ENCODE measurements at regions of chr6 and their contacts with region 1.

Region 1: DNA sequence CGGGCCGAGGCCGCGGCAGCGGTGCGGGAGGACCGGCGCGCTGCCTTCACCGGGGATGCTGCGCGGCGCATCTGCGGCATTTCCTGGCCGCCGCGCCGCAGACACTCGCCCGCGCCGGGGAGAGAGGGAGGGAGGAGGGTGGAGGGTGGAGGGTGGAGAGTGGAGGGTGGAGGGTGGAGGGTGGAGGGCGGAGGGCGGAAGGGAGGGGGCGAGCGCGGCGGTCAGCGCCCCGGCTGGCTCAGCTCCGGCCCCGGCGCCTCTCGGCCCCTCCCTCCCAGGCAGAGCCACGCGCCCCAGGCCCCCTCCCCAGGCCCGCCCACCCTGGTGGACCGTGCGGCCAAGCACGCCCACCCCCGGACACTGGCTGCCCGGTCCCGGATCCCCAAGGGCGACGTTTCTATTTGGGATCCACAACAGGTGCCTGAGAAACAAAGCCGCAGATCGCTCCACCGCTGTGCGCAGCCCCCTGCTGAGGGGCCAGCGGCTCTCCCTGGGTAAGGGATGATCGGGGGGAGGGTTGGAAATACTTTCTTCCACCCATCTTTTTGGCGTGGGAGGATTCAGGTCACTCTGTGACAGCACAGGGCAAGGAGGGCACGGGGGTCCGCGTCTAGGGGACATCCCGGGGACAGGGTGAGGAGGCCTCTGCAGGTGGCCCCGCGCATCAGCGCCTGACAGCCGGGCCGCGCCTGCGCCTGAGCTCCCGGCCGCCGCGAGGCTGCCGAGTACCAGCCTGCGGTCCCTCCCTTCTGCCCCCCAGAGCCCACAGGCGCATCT is 111.1 kb upstream of the BEND6 start:
- DNase-seq: peak; percentile 88
- H3K4me3 ChIP-seq: peak overlapping the region; percentile 50 to 88 (median 84)
- H3K27ac ChIP-seq: peak overlapping the region; percentile 74
- H3K4me1 ChIP-seq: peaks cover 28% of the 10 kb centered on the region
- H3K27me3 ChIP-seq: no peaks in the 10 kb centered on the region
- CTCF ChIP-seq: peak; percentile 55 to 83
- POLR2A ChIP-seq: peak; percentile 50

Region 2: GRCh38 chr6:56637640-56638039 is 206.1 kb before region 1 on chr6:
- CTCF ChIA-PET with region 1: interaction called, 70 read pairs
- POLR2A ChIA-PET with region 1: no interaction called
- dilution Hi-C with region 1: no loop called
- intact Hi-C with region 1: loop called (anchors 2 kb)
- DNase-seq: peak; percentile 83
- H3K4me3 ChIP-seq: no peak overlapping the region
- H3K27ac ChIP-seq: no peak overlapping the region
- H3K4me1 ChIP-seq: peaks cover 4% of the 10 kb centered on the region
- H3K27me3 ChIP-seq: no peaks in the 10 kb centered on the region
- CTCF ChIP-seq: peak; percentile 41 to 42
- POLR2A ChIP-seq: no peak

Region 3: DNA sequence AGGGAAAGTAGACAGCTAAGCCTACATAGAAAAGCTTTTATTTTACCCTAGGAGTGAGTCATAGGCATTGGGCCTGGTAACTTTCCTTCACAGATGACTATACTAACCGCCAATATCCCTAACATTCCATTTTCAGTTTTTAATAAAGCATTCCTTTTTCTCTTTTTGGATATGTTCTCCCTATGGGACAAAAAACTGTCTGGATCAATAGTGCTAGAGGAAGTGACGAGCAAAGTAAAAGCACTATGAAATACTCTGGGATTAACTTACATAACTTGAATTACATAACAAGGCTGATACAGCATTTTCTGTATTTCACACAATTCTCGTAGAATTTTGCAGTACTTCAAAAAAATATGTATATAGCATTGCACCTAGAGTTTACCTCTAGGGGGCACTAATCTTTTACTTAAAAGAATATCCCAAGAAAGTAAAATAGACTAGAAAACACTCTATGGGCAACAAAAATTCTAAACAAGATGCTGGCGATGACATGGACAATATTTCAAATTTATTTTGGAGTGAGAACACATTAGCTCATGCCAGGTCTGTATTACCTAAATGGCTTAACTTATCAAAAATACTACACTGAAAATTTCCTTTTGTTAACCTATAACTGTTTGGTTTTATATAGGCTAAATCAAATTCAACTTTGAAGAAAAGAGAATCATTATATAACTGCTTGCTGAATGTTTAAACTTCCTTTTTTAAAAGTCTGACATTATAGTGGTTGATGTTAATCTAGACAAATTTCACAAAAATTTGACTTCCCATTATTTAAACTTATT is 134.8 kb before region 1 on chr6:
- CTCF ChIA-PET with region 1: interaction called, 19 read pairs
- POLR2A ChIA-PET with region 1: no interaction called
- dilution Hi-C with region 1: no loop called
- intact Hi-C with region 1: no loop called
- DNase-seq: peak; percentile 73
- H3K4me3 ChIP-seq: peak overlapping the region in 1 of 3 experiments; percentile 15
- H3K27ac ChIP-seq: peak overlapping the region; percentile 69
- H3K4me1 ChIP-seq: peaks cover 30% of the 10 kb centered on the region
- H3K27me3 ChIP-seq: no peaks in the 10 kb centered on the region
- CTCF ChIP-seq: peak; percentile 30 to 40
- POLR2A ChIP-seq: no peak

Region 4: GRCh38 chr6:56714982-56715456 is 128.7 kb before region 1 on chr6:
- CTCF ChIA-PET with region 1: interaction called, 19 read pairs
- POLR2A ChIA-PET with region 1: no interaction called
- dilution Hi-C with region 1: no loop called
- intact Hi-C with region 1: no loop called
- DNase-seq: peak; percentile 95
- H3K4me3 ChIP-seq: no peak overlapping the region
- H3K27ac ChIP-seq: peak overlapping the region; percentile 86
- H3K4me1 ChIP-seq: peaks cover 50% of the 10 kb centered on the region
- H3K27me3 ChIP-seq: no peaks in the 10 kb centered on the region
- CTCF ChIP-seq: no peak
- POLR2A ChIP-seq: peak; percentile 34

Region 5: DNA sequence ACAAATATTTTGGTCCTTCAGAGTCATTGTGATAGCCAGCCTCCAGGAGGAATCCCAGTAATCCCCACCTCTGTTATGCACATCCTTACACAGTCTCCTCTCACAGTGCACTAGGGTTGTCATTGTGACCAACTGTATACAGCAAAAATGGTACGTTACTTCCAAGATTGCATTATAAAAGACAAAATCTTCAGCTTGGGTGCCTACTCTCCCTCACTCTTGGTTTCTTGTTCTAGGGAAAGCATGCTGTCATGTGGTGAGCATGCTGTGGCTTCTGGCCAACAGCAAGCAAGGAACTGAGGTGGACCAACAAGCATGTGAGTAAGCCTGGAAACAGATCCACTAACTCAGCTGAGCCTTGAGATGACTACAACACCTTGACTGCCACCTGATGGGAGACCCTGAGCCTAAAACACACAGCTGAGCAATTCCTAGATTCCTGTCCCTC is 71.0 kb before region 1 on chr6:
- CTCF ChIA-PET with region 1: interaction called, 7 read pairs
- POLR2A ChIA-PET with region 1: no interaction called
- dilution Hi-C with region 1: no loop called
- intact Hi-C with region 1: loop called (anchors 5 kb)
- DNase-seq: peak; percentile 56
- H3K4me3 ChIP-seq: no peak overlapping the region
- H3K27ac ChIP-seq: no peak overlapping the region
- H3K4me1 ChIP-seq: peaks cover 32% of the 10 kb centered on the region
- H3K27me3 ChIP-seq: no peaks in the 10 kb centered on the region
- CTCF ChIP-seq: no peak
- POLR2A ChIP-seq: no peak

Region 6: GRCh38 chr6:56862415-56863175 is 18.8 kb after region 1 on chr6:
- CTCF ChIA-PET with region 1: interaction called, 13 read pairs
- POLR2A ChIA-PET with region 1: interaction called, 3 read pairs
- dilution Hi-C with region 1: no loop called
- intact Hi-C with region 1: no loop called
- DNase-seq: peak; percentile 31
- H3K4me3 ChIP-seq: no peak overlapping the region
- H3K27ac ChIP-seq: no peak overlapping the region
- H3K4me1 ChIP-seq: peaks cover 57% of the 10 kb centered on the region
- H3K27me3 ChIP-seq: no peaks in the 10 kb centered on the region
- CTCF ChIP-seq: no peak
- POLR2A ChIP-seq: no peak

Region 7: GRCh38 chr6:56868687-56869086 is 24.9 kb after region 1 on chr6:
- CTCF ChIA-PET with region 1: interaction called, 11 read pairs
- POLR2A ChIA-PET with region 1: no interaction called
- dilution Hi-C with region 1: no loop called
- intact Hi-C with region 1: no loop called
- DNase-seq: peak; percentile 91
- H3K4me3 ChIP-seq: peak overlapping the region in 1 of 3 experiments; percentile 5
- H3K27ac ChIP-seq: peak overlapping the region; percentile 70
- H3K4me1 ChIP-seq: peaks cover 52% of the 10 kb centered on the region
- H3K27me3 ChIP-seq: no peaks in the 10 kb centered on the region
- CTCF ChIP-seq: no peak
- POLR2A ChIP-seq: no peak